ENCODE measurements at regions of chr10 and their contacts with region 1.

Region 1: DNA sequence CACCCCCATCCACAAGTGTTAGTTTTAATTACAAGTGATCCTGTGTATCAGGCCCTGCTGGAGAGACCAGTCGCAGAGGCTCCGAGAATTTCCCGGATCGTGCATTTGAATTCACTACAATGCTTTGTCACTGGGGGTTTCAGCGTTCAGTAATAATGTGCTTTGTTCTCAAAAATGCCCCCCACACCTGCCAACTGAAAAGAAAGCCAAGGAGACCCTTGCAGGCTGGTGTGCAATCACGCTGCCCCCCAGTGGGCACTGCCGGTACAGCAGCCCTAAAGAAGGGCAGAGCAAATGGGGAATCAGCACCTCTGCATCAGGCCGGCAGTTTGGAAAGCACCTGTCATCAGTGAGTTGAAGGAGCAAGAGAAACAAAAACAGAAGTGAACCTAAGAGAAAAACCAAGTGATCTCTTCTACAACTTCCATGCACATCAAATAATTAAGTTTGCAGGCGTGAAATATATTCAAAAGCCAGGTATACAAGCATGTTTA is 177.6 kb downstream of the PARD3 start:
- DNase-seq: peak in 9 of 10 donors; percentile 29 to 85 (median 70)
- H3K4me3 ChIP-seq: peak overlapping the region in 19 of 59 donors; percentile 4 to 46 (median 21)
- H3K27ac ChIP-seq: no peak overlapping the region
- H3K27me3 ChIP-seq: no peaks in the 10 kb centered on the region
- CTCF ChIP-seq: peak; percentile 82 to 98 (median 95)

Region 2: GRCh38 chr10:33193057-33193700 is 1444.3 kb before region 1 on chr10:
- intact Hi-C with region 1: loop called (anchors 5 kb)
- DNase-seq: peak in 8 of 10 donors; percentile 19 to 79 (median 69)
- H3K4me3 ChIP-seq: peak overlapping the region in 1 of 59 donors; percentile 15
- H3K27ac ChIP-seq: no peak overlapping the region
- H3K27me3 ChIP-seq: peaks cover 0 to 10% (median 0%) of the 10 kb centered on the region in 45 donors
- CTCF ChIP-seq: peak; percentile 53 to 87 (median 74)

Region 3: GRCh38 chr10:33684211-33684611 is 953.3 kb before region 1 on chr10:
- intact Hi-C with region 1: no loop called
- DNase-seq: no peak
- H3K4me3 ChIP-seq: no peak overlapping the region
- H3K27ac ChIP-seq: no peak overlapping the region
- H3K27me3 ChIP-seq: no peaks in the 10 kb centered on the region
- CTCF ChIP-seq: no peak

Region 4: DNA sequence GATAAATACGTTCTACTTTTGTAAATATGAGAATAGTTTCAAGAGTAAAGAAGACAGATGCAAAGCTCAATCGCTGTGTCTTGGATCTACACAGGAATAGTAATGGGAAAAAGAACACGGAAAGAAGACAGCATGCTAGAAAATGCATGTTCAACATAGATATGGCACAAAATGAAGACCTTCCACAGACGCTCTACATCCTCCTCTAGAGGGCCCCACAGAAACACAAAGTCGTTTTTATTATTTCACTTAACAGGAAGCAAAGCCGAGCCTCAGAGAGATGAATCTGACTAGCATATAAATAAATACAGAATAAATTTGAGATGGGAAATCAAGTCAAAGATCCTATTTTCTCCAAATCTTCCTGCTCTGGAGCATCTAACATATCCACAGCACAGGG is 114.9 kb before region 1 on chr10:
- intact Hi-C with region 1: loop called in 1 of 2 experiments (anchors 10 kb)
- DNase-seq: no peak
- H3K4me3 ChIP-seq: peak overlapping the region in 14 of 59 donors; percentile 4 to 37 (median 19)
- H3K27ac ChIP-seq: no peak overlapping the region
- H3K27me3 ChIP-seq: peaks cover 0 to 5% (median 0%) of the 10 kb centered on the region in 45 donors
- CTCF ChIP-seq: peak in 43 of 56 donors; percentile 14 to 67 (median 33)

Region 5: DNA sequence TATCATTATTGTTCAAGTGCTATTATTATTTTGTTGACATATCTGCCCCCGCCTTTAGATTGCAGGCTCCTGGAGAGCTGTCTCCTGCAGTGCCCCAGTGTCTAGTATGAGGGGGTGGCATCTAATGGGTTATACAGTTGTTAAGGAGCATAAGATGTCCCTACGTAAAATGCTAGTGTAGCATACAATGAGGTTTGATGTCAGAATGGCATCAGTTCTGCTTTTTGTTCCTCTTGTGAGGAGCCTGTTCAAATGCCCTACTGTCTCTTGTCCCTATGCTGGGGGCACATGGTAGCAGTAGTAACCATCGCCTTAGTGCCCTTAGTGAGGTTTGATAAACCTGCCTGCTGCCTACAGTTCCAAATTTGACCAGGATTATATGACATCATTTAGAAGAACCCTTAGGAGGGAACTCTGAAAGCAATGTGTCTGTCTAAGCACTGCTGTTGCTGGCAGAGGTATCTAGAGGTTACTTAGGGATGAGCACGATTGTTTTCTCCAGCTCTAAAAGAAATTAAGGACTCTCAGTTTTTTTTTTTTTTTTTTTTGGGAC is 498.9 kb after region 1 on chr10:
- intact Hi-C with region 1: no loop called
- DNase-seq: no peak
- H3K4me3 ChIP-seq: no peak overlapping the region
- H3K27ac ChIP-seq: no peak overlapping the region
- H3K27me3 ChIP-seq: no peaks in the 10 kb centered on the region
- CTCF ChIP-seq: no peak

Measured in dorsolateral prefrontal cortex (tissue), 120 donors.